ENCODE measurements at regions of chr4 and their contacts with region 1.

Region 1: DNA sequence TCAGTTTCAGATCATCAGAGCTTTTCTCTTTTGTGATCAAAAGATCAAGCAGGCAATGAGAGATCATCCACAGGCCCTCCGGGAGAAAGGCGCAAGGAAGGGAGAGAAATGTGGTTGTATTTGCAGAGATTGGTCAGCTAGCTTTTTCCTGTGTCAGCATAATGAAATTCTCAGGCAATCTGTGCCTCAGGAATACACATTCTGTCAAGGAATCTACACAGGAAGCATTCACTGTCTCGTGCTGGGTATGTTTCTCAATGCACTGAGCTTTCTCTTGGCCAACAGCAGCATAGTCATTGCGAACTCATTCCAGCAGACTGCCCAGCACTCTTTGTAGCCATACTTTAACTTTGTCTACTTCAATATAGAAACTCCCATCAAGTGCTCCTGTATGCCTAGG is 413.7 kb downstream of the PPP3CA start:
- DNase-seq: no peak
- H3K4me3 Mint-ChIP-seq: no peak overlapping the region
- H3K27ac Mint-ChIP-seq: no peak overlapping the region
- H3K4me1 Mint-ChIP-seq: peaks cover 12% of the 10 kb centered on the region
- H3K27me3 Mint-ChIP-seq: peaks cover 2% of the 10 kb centered on the region

Region 2: GRCh38 chr4:101155368-101155767 is 221.7 kb after region 1 on chr4:
- intact Hi-C with region 1: loop called (anchors 5 kb)
- DNase-seq: no peak
- H3K4me3 Mint-ChIP-seq: no peak overlapping the region
- H3K27ac Mint-ChIP-seq: no peak overlapping the region
- H3K4me1 Mint-ChIP-seq: peaks cover 28% of the 10 kb centered on the region
- H3K27me3 Mint-ChIP-seq: no peaks in the 10 kb centered on the region

Measured in activated T-helper 1 cell treated with anti-CD3 and anti-CD28 coated beads, Interleukin-12 subunit alpha, Interleukin-12 subunit beta, Interleukin-2, Interleukin-4 antibody, amounts not matched to agents 30 ng/mL and 10 ng/mL and 1 ng/mL, durations not matched to agents 14 hours and 24 hours and 36 hours (primary cell).